ENCODE measurements at regions of chr11 and their contacts with region 1.

Region 1: GRCh38 chr11:15101072-15101709 is 13.5 kb upstream of the INSC start:
- DNase-seq: peak; percentile 54 to 95 (median 73)

Region 2: DNA sequence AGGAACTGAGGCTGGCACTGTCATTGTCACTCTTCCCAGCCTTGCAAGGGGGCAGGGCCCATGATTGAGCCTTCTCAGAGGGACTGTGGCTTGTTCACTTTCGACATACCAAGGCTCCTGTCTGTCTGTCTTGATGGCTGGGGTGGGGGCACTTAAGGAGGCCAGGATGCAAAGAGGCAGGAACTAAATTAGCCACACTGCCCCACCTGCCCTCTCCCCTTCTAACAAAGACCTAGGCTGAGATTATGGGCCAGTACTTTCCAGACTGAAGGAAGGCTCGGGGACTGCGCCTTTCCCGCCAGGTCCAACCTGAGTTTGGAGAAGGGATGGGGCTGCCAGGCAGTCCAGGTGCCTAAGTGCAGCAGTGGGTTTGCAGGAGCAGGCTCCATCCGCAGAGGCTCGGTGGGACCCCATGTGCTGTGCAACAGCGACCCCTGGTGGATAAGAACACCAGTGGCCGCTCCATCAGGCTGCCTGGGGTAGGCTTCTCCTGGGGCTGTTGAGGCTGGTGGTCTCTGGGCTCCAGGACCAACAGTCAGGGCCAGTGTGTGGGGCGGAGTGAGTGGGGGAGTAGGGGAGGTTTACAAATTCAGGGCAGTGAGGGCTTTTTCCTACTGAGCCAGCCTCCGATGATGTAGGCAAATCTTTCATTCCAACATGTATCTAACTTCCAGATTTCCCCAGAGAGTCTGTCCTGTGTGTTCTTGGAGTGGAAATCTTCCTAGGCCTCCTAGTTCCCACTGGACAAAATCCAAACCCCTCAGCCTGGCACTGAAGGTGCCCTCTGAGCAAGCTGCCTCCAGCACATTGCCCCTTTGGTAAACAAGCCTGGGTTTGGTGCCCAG is 107.4 kb after region 1 on chr11:
- intact Hi-C with region 1: loop called (anchors 1 kb)
- DNase-seq: peak; percentile 63 to 97 (median 85)

Measured in posterior cingulate gyrus (tissue), 11 donors.